ENCODE measurements at regions of chr6 and their contacts with region 1.

Region 1: DNA sequence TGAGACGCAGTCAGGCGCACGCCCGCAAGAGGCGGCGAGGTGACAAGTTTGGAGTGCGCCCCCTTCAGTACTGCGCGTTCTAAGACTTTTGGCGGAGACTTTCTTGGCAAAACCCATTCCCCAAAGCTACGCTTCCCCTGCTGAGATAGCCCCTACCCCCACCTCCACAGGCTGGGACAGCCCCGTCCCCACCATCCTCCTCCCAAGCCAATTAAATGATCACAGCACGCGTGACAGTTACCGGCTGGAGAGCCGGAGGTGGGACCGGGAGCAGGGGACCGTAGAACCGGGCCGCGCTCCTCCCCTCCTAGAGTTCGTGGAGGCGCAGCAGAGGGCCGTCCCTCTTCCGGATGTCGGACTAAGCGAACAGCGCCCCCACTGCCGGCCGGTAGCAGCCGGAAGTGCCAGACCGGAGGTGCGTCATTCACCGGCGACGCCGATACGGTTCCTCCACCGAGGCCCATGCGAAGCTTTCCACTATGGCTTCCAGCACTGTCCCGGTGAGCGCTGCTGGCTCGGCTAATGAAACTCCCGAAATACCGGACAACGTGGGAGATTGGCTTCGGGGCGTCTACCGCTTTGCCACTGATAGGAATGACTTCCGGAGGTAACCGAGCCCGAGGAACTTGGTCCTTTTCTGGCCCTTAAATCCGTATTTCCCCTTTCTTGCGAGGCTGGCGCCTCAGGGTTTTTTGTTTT is at the start of gene TOMM6:
- DNase-seq: peak; percentile 95
- H3K4me3 Mint-ChIP-seq: peak within 1 kb of the TSS; percentile 97
- H3K27ac Mint-ChIP-seq: peak within 1 kb of the TSS; percentile 98
- H3K4me1 Mint-ChIP-seq: peaks cover 10% of the 10 kb centered on the region
- H3K27me3 Mint-ChIP-seq: peaks cover 1% of the 10 kb centered on the region
- total RNA-seq, gene TOMM6: 167 to 202 TPM

Region 2: GRCh38 chr6:41463062-41463930 is 324.1 kb before region 1 on chr6:
- CTCF ChIA-PET with region 1: no interaction called
- POLR2A ChIA-PET with region 1: no interaction called
- DNase-seq: no peak
- H3K4me3 Mint-ChIP-seq: no peak overlapping the region
- H3K27ac Mint-ChIP-seq: no peak overlapping the region
- H3K4me1 Mint-ChIP-seq: no peaks in the 10 kb centered on the region
- H3K27me3 Mint-ChIP-seq: peaks cover 53% of the 10 kb centered on the region

Region 3: GRCh38 chr6:41733707-41734665 is 53.4 kb before region 1 on chr6:
- CTCF ChIA-PET with region 1: interaction called, 13 read pairs
- POLR2A ChIA-PET with region 1: no interaction called
- DNase-seq: peak; percentile 67
- H3K4me3 Mint-ChIP-seq: peak overlapping the region; percentile 79
- H3K27ac Mint-ChIP-seq: peak overlapping the region; percentile 84
- H3K4me1 Mint-ChIP-seq: peaks cover 36% of the 10 kb centered on the region
- H3K27me3 Mint-ChIP-seq: no peaks in the 10 kb centered on the region

Region 4: GRCh38 chr6:41801380-41801779 is 14.0 kb after region 1 on chr6:
- CTCF ChIA-PET with region 1: interaction called, 28 read pairs
- POLR2A ChIA-PET with region 1: no interaction called
- DNase-seq: no peak
- H3K4me3 Mint-ChIP-seq: no peak overlapping the region
- H3K27ac Mint-ChIP-seq: no peak overlapping the region
- H3K4me1 Mint-ChIP-seq: peaks cover 2% of the 10 kb centered on the region
- H3K27me3 Mint-ChIP-seq: no peaks in the 10 kb centered on the region

Region 5: GRCh38 chr6:41920921-41921711 is 133.7 kb after region 1 on chr6 and contains the starts of genes BYSL and MED20:
- CTCF ChIA-PET with region 1: interaction called, 34 read pairs
- POLR2A ChIA-PET with region 1: no interaction called
- DNase-seq: peak; percentile 95
- H3K4me3 Mint-ChIP-seq: peak within 1 kb of the TSS; percentile 100
- H3K27ac Mint-ChIP-seq: peak within 1 kb of the TSS; percentile 98
- H3K4me1 Mint-ChIP-seq: peaks cover 57% of the 10 kb centered on the region
- H3K27me3 Mint-ChIP-seq: no peaks in the 10 kb centered on the region
- total RNA-seq, gene BYSL: 29.3 to 29.8 TPM
- total RNA-seq, gene MED20: 18.6 to 22.7 TPM

Region 6: GRCh38 chr6:42050266-42051032 is 263.1 kb after region 1 on chr6 and contains the start of gene TAF8:
- CTCF ChIA-PET with region 1: interaction called, 192 read pairs
- POLR2A ChIA-PET with region 1: interaction called, 3 read pairs
- DNase-seq: peak; percentile 94
- H3K4me3 Mint-ChIP-seq: peak within 1 kb of the TSS; percentile 87
- H3K27ac Mint-ChIP-seq: peak within 1 kb of the TSS; percentile 98
- H3K4me1 Mint-ChIP-seq: peaks cover 73% of the 10 kb centered on the region
- H3K27me3 Mint-ChIP-seq: no peaks in the 10 kb centered on the region
- total RNA-seq, gene TAF8: 53.2 to 60.2 TPM

Region 7: DNA sequence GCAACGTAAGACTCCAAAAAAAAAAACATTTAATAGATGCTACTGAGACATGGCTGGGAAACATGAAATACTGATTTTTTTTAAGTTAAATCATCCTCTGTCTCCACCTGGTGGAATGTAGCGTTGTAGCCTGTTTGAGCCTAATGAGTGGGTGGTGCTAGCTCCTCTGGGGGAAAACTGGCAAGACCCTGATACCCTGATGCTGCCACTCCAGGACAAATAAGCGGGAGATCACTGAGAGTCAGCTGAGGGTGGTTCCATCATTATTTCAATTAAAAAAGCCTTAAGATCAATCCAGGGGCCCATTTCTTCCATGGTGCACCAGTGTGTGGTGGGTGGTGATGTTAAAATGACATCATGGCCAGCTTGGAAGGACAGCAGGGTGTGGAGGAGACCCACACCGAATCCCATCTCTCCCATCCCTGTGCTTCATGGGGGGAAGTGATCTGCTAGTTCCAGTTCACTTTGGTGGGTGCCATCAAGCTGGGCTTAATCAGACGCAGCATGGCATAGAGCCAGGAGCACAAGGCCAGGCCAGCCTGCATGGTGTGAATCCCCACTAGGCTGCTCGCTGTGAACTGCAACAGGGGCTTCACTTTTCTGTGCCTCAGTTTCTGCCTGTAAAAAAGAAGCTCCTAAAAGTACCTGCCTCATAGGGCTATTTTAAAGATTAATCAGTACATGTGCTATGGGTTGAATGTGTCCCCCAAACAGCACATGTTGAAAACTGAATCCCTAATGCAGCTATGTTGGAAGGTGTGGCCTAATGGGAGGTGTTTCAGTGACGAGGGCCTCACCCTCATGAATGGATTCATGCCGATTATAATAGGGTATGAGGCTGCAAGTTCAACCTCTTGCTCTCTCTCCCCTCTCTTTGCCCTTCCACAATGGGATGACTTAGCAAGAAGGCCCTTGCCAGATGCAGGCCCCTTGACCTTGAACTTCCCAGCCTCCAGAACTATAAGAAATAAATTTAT is 443.3 kb after region 1 on chr6:
- CTCF ChIA-PET with region 1: no interaction called
- POLR2A ChIA-PET with region 1: no interaction called
- DNase-seq: no peak
- H3K4me3 Mint-ChIP-seq: no peak overlapping the region
- H3K27ac Mint-ChIP-seq: no peak overlapping the region
- H3K4me1 Mint-ChIP-seq: no peaks in the 10 kb centered on the region
- H3K27me3 Mint-ChIP-seq: no peaks in the 10 kb centered on the region

Measured in activated CD4-positive, alpha-beta T cell treated with anti-CD3 and anti-CD28 coated beads, Interleukin-2, amount 10 ng/mL, durations not matched to agents 7 days and 5 days (primary cell).